Endothelial cell of umbilical vein (primary cell): ENCODE measurements at regions of chr9 and their contacts with region 1.

Region 1: GRCh38 chr9:122940603-122941559 is at the start of gene RABGAP1:
- DNase-seq: peak; percentile 98
- H3K4me3 ChIP-seq: peak within 1 kb of the TSS; percentile 78 to 96 (median 92)
- H3K27ac ChIP-seq: peak within 1 kb of the TSS; percentile 62
- H3K4me1 ChIP-seq: peaks cover 12% of the 10 kb centered on the region
- H3K27me3 ChIP-seq: no peaks in the 10 kb centered on the region
- CTCF ChIP-seq: no peak
- POLR2A ChIP-seq: peak; percentile 81
- total RNA-seq, gene RABGAP1: 43.1 and 53.6 TPM in 2 replicates

Region 2: GRCh38 chr9:121895818-121896544 is 1044.9 kb before region 1 on chr9:
- CTCF ChIA-PET with region 1: no interaction called
- POLR2A ChIA-PET with region 1: no interaction called
- dilution Hi-C with region 1: no loop called
- intact Hi-C with region 1: no loop called
- DNase-seq: peak; percentile 39
- H3K4me3 ChIP-seq: no peak overlapping the region
- H3K27ac ChIP-seq: no peak overlapping the region
- H3K4me1 ChIP-seq: no peaks in the 10 kb centered on the region
- H3K27me3 ChIP-seq: no peaks in the 10 kb centered on the region
- CTCF ChIP-seq: no peak
- POLR2A ChIP-seq: no peak

Region 3: DNA sequence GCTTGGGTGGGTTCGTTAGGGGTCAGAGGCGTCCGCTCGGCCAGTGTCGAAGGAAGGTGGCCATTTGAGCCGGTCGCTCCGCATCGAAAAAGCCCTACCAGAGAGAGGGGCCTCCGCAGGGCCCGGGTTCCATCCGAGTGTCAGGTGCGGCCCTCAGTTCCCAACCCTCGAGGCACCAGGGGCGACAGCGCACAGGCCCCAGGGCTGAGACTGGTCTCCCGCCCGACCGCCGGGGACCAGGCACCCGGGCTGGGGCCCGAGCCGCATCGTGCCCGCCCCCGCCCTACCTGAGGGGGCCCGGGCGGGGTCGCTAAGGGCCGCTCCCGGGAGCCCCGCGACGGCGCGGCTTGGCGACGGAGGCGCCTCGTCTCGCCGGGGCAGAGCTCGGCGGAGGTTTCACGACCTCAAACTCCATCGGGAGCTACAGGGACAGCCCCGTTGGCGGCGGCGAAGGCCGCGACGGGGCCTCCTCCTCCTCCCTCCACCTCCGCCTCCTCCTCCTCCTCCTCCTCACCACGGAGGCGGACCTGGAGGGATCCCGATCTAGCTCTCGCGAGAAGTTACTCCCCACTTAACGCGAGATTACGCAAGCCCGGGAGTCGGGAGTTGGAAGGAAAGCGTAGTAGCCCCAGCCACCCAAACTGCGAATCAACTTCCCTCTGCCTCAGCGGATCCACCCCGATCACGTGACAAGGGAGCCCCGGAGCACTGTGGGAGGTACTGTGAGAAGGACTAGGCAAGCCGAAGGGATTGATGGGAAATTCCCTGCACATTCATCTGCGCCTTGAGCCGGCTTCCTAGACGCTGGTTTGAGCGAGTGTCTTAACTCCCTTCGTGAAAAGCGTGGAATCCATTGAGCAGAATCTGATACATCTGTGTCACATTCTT is 35.8 kb before region 1 on chr9 and contains the start of gene RC3H2:
- CTCF ChIA-PET with region 1: interaction called, 3 read pairs
- POLR2A ChIA-PET with region 1: interaction called, 11 read pairs
- dilution Hi-C with region 1: no loop called
- intact Hi-C with region 1: loop called (anchors 2 kb)
- DNase-seq: peak; percentile 100
- H3K4me3 ChIP-seq: peak within 1 kb of the TSS; percentile 53 to 92 (median 54)
- H3K27ac ChIP-seq: peak within 1 kb of the TSS; percentile 73
- H3K4me1 ChIP-seq: peaks cover 21% of the 10 kb centered on the region
- H3K27me3 ChIP-seq: no peaks in the 10 kb centered on the region
- CTCF ChIP-seq: no peak
- POLR2A ChIP-seq: peak; percentile 88
- total RNA-seq, gene RC3H2: 57.3 and 63.0 TPM in 2 replicates

Region 4: GRCh38 chr9:122912964-122913673 is 27.8 kb before region 1 on chr9 and contains the start of gene ZBTB6:
- CTCF ChIA-PET with region 1: interaction called, 4 read pairs
- POLR2A ChIA-PET with region 1: interaction called, 14 read pairs
- dilution Hi-C with region 1: no loop called
- intact Hi-C with region 1: no loop called
- DNase-seq: peak; percentile 77
- H3K4me3 ChIP-seq: peak within 1 kb of the TSS; percentile 78 to 99 (median 93)
- H3K27ac ChIP-seq: peak within 1 kb of the TSS; percentile 60
- H3K4me1 ChIP-seq: peaks cover 12% of the 10 kb centered on the region
- H3K27me3 ChIP-seq: no peaks in the 10 kb centered on the region
- CTCF ChIP-seq: no peak
- POLR2A ChIP-seq: peak; percentile 64
- total RNA-seq, gene ZBTB6: 5.5 and 6.5 TPM in 2 replicates

Region 5: GRCh38 chr9:122954253-122954691 is 13.4 kb after region 1 on chr9:
- CTCF ChIA-PET with region 1: interaction called, 6 read pairs
- POLR2A ChIA-PET with region 1: interaction called, 10 read pairs
- dilution Hi-C with region 1: no loop called
- intact Hi-C with region 1: no loop called
- DNase-seq: peak; percentile 88
- H3K4me3 ChIP-seq: no peak overlapping the region
- H3K27ac ChIP-seq: peak overlapping the region; percentile 74
- H3K4me1 ChIP-seq: peaks cover 24% of the 10 kb centered on the region
- H3K27me3 ChIP-seq: no peaks in the 10 kb centered on the region
- CTCF ChIP-seq: no peak
- POLR2A ChIP-seq: no peak

Region 6: DNA sequence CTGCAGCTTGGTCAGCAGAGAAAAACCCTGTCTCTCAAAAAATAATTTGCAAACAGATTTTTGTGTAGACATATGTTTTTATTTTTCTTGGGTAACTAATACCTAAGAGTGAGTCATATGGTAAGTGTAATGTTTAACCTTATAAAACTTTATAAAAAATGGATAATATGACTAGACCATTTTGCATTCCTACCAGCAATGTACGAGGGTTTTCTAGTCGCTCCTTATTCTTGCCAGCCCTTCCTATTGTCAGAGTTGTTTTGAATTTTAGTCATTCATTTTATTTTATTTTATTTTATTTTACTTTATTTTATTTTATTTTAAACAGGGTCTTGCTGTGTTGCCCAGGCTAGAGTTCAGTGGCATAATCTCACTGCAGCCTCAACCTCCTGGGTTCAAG is 37.7 kb after region 1 on chr9:
- CTCF ChIA-PET with region 1: interaction called, 3 read pairs
- POLR2A ChIA-PET with region 1: interaction called, 6 read pairs
- dilution Hi-C with region 1: no loop called
- intact Hi-C with region 1: loop called (anchors 5 kb)
- DNase-seq: no peak
- H3K4me3 ChIP-seq: no peak overlapping the region
- H3K27ac ChIP-seq: no peak overlapping the region
- H3K4me1 ChIP-seq: peaks cover 16% of the 10 kb centered on the region
- H3K27me3 ChIP-seq: no peaks in the 10 kb centered on the region
- CTCF ChIP-seq: no peak
- POLR2A ChIP-seq: no peak